ENCODE measurements at regions of chr18 and their contacts with region 1.

Region 1: DNA sequence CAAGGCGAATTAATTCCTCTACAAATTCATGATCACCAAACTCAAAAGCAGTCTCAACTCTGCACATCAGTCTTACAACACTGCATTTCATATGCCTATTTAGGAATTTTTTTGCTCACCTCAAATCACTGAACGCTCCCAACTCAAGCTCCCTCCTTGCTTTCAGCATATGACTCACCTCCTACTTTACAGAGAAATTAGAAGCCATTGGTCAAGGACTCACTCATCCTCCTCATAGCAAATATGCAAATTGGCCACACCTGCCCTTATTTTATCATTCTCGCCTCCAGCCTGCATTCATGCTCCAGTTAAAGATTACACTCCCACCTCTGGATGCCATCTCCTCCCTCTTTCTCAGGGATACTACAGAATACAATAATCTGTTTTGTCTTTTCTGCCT is 148.8 kb downstream of the MBD2 start:
- DNase-seq: no peak
- ATAC-seq: no peak
- H3K4me3 ChIP-seq: no peak overlapping the region
- H3K27ac ChIP-seq: no peak overlapping the region
- H3K4me1 ChIP-seq: no peaks in the 10 kb centered on the region
- H3K27me3 ChIP-seq: no peaks in the 10 kb centered on the region
- CTCF ChIP-seq: no peak

Region 2: GRCh38 chr18:53920312-53921075 is 155.2 kb before region 1 on chr18:
- CTCF ChIA-PET with region 1: no interaction called
- POLR2A ChIA-PET with region 1: no interaction called
- in situ Hi-C with region 1: no loop called
- intact Hi-C with region 1: loop called (anchors 5 kb)
- DNase-seq: no peak
- ATAC-seq: no peak
- H3K4me3 ChIP-seq: no peak overlapping the region
- H3K27ac ChIP-seq: no peak overlapping the region
- H3K4me1 ChIP-seq: no peaks in the 10 kb centered on the region
- H3K27me3 ChIP-seq: no peaks in the 10 kb centered on the region
- CTCF ChIP-seq: no peak

Measured in Panc1 (cell line).